Activated CD4-positive, alpha-beta T cell treated with anti-CD3 and anti-CD28 coated beads for 36 hours (primary cell): ENCODE measurements at regions of chr4 and their contacts with region 1.

Region 1: DNA sequence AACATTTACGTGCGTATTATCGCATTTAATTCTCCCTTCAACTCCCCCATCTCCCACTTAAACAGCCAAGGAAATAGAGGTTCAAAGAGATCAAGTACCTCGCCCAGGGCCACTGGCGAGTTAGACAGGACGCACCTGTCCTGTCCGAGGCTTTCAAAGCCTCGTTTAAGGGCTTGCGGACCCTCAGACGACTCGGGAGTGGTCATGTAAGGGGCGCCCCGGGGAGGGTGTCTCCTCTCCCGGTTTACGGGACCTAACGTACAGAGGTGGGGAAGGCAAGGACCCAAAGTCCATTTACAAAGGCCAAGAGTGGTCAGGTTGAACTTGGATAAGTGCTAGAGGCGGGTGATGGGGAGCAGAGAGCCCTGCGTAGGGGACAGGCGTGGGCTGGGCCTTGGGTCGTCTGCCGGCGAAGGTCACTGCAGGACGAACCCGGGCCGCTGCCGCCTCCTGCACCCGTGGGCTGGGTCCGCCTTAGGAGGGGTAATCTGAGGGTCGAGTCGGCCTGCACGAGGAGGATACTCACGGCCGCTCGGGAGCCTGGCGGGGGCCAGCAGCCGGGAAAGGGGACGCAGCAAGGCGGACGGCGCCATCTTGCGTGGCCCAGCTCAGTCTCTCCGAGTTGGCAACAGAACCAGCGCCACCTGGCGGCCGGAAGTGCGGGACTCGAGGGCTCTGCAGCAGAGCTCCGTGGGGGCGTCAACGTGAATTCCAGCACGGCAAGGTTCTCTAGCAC is 5.9 kb upstream of the NAA15 start:
- DNase-seq: peak; percentile 99
- ATAC-seq: peak; percentile 89
- H3K4me3 Mint-ChIP-seq: peak overlapping the region; percentile 95
- H3K27ac Mint-ChIP-seq: peak overlapping the region; percentile 96
- H3K4me1 Mint-ChIP-seq: peaks cover 38% of the 10 kb centered on the region
- H3K27me3 Mint-ChIP-seq: no peaks in the 10 kb centered on the region

Region 2: DNA sequence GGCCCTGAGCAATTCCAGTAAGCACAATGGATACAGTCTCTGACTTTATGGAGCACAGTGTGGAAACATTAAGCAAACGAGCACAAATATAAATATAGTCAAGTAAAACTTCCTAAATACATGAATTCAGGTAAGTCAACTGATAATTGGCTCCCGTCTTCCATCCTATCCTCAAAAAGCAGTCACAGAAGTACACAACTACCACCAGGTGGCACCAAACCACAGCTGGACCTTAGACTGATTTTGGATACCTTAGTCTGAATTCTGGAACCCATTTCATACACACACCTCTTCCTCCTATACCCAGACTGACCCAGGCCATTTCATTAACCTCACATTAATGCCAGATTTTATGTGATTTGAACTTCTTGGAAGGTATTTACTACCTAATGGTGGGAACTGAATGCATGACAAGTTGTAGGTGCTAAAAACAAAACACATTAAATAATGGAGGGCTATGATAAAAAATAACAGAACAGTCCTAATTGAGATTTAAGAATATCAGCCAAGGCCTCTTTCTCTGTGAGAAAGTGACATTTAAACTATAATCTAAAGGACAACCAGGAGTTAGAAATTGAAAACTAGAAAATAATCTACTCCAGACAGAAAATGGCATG is 195.9 kb before region 1 on chr4:
- CTCF ChIA-PET with region 1: interaction called, 28 read pairs
- POLR2A ChIA-PET with region 1: no interaction called
- intact Hi-C with region 1: loop called (anchors 1 to 2 kb)
- DNase-seq: peak; percentile 84
- ATAC-seq: peak; percentile 66
- H3K4me3 Mint-ChIP-seq: no peak overlapping the region
- H3K27ac Mint-ChIP-seq: no peak overlapping the region
- H3K4me1 Mint-ChIP-seq: peaks cover 2% of the 10 kb centered on the region
- H3K27me3 Mint-ChIP-seq: no peaks in the 10 kb centered on the region

Region 3: GRCh38 chr4:139229534-139230039 is 65.8 kb before region 1 on chr4:
- CTCF ChIA-PET with region 1: interaction called, 28 read pairs
- POLR2A ChIA-PET with region 1: no interaction called
- intact Hi-C with region 1: loop called (anchors 1 kb)
- DNase-seq: no peak
- ATAC-seq: peak; percentile 66
- H3K4me3 Mint-ChIP-seq: no peak overlapping the region
- H3K27ac Mint-ChIP-seq: no peak overlapping the region
- H3K4me1 Mint-ChIP-seq: peaks cover 1% of the 10 kb centered on the region
- H3K27me3 Mint-ChIP-seq: no peaks in the 10 kb centered on the region

Region 4: GRCh38 chr4:139275281-139275735 is 20.1 kb before region 1 on chr4:
- CTCF ChIA-PET with region 1: interaction called, 10 read pairs
- POLR2A ChIA-PET with region 1: no interaction called
- intact Hi-C with region 1: no loop called
- DNase-seq: no peak
- ATAC-seq: no peak
- H3K4me3 Mint-ChIP-seq: no peak overlapping the region
- H3K27ac Mint-ChIP-seq: no peak overlapping the region
- H3K4me1 Mint-ChIP-seq: peaks cover 11% of the 10 kb centered on the region
- H3K27me3 Mint-ChIP-seq: peaks cover 33% of the 10 kb centered on the region

Region 5: DNA sequence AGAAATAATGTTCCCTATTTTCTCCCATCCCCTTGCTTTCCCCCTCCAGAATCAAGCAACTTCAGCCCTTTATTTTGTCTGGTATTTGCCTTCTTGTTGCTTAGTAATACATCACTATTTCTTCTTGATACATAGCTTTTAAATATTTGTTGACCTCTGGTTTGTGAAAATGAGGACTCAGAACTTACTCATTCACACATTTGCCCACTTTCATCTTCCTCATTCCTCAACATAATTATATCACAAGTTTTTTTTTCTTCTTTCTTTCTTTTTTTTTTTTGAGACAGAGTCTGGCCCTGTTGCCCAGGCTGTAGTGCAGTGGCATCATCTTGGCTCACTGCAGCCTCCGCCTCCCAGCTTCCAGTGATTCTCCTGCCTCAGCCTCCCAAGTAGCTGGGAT is 35.8 kb after region 1 on chr4:
- CTCF ChIA-PET with region 1: interaction called, 12 read pairs
- POLR2A ChIA-PET with region 1: interaction called, 3 read pairs
- intact Hi-C with region 1: loop called in 1 of 2 experiments (anchors 5 kb)
- DNase-seq: no peak
- ATAC-seq: no peak
- H3K4me3 Mint-ChIP-seq: no peak overlapping the region
- H3K27ac Mint-ChIP-seq: peak overlapping the region; percentile 69
- H3K4me1 Mint-ChIP-seq: peaks cover 48% of the 10 kb centered on the region
- H3K27me3 Mint-ChIP-seq: no peaks in the 10 kb centered on the region